GM10248 (cell line): ENCODE measurements at regions of chr10 and their contacts with region 1.

Region 1: GRCh38 chr10:122342293-122343134 is 32.0 kb upstream of the PLEKHA1 start:
- DNase-seq: peak; percentile 62
- CTCF ChIP-seq: peak; percentile 62

Region 2: DNA sequence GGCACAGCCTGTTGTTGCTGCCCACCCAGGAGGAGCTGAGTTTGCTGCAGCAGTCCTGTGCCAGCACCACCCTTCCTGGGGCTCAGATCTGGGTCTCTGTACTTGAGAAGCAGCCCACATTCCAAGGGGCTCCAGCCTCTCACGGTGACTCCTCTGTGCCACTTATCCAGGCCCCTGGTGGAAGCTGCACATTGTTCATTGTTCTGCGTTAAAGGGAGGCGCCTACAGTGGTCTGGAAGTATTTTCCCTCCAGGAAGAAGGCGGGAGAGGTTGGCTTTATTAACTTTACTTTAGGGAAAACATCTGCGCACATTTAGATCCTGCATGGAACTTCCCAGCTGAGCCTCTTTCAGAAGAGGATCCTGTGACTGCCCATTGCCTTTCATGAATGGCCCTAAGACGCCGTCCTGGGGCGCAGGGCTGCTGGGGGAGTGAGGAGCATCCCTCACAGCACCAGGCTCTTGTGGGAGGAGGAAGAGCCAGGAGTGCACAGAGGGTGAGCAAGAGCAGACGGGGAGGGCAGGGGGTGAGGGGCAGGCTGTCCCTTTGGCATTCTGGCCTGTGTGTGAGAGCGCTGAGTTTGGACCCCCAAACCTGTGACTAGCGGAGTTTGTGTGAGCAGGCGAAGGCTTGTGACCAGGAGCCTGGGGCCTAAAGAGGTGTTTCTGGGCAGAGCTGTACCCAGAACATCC is 170.1 kb before region 1 on chr10:
- CTCF ChIA-PET with region 1: no interaction called
- POLR2A ChIA-PET with region 1: no interaction called
- DNase-seq: no peak
- CTCF ChIP-seq: no peak

Region 3: DNA sequence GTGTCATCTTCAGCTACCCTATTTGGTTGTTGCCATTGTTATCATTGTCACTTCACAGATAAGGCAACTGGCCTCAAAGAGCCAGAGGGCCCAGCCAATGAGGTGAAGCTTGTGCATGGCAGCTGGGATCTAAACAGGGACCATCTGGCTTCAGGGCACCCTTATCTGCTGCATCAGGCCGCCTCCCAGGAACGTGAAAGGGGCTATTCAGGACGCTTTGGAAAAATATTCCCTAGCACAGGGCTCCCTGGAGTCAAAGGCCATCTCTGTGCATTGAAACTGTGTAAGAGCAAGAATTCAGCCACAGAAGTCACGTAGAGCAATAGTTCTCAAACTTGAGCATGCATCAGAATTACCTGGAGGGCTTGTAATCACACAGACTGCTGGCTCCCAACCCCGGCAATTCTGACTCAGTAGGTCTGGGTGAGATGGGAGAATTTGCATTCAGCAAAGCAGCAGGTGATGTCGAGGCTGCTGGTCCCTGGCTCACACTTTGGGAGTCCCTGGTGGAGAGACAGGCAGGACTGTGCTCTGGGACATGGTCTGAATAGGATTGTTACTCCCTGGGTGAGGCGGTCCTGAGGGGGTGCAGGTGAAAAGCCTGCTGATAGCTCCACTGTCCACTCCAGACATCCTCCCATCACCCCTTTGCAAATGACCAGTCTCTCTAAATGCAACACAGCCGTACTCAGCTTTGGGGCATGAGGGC is 10.5 kb after region 1 on chr10:
- CTCF ChIA-PET with region 1: interaction called, 11 read pairs
- POLR2A ChIA-PET with region 1: no interaction called
- DNase-seq: no peak
- CTCF ChIP-seq: no peak